ENCODE measurements at regions of chr21 and their contacts with region 1.

Region 1: GRCh38 chr21:29091032-29091431 is 17.6 kb upstream of the CCT8 start:
- DNase-seq: peak; percentile 84
- ATAC-seq: peak; percentile 89
- H3K4me3 ChIP-seq: no peak overlapping the region
- H3K27ac ChIP-seq: peak overlapping the region; percentile 7; the same call in 1 of the 2 replicates
- H3K4me1 ChIP-seq: peaks cover 16% of the 10 kb centered on the region
- H3K27me3 ChIP-seq: no peaks in the 10 kb centered on the region
- CTCF ChIP-seq: no peak

Region 2: GRCh38 chr21:29145354-29145782 is 54.3 kb after region 1 on chr21:
- CTCF ChIA-PET with region 1: interaction called, 3 read pairs
- POLR2A ChIA-PET with region 1: no interaction called
- intact Hi-C with region 1: loop called (anchors 1 kb)
- DNase-seq: peak; percentile 97
- ATAC-seq: peak; percentile 93
- H3K4me3 ChIP-seq: peak overlapping the region; percentile 18; the same call in 1 of the 2 replicates
- H3K27ac ChIP-seq: peak overlapping the region; percentile 77
- H3K4me1 ChIP-seq: peaks cover 34% of the 10 kb centered on the region
- H3K27me3 ChIP-seq: no peaks in the 10 kb centered on the region
- CTCF ChIP-seq: no peak

Region 3: GRCh38 chr21:29155118-29155932 is 64.3 kb after region 1 on chr21:
- CTCF ChIA-PET with region 1: interaction called, 10 read pairs
- POLR2A ChIA-PET with region 1: no interaction called
- intact Hi-C with region 1: loop called (anchors 1 kb)
- DNase-seq: peak; percentile 39
- ATAC-seq: peak; percentile 91
- H3K4me3 ChIP-seq: peak overlapping the region; percentile 59
- H3K27ac ChIP-seq: no peak overlapping the region
- H3K4me1 ChIP-seq: peaks cover 4% of the 10 kb centered on the region
- H3K27me3 ChIP-seq: no peaks in the 10 kb centered on the region
- CTCF ChIP-seq: no peak

Region 4: DNA sequence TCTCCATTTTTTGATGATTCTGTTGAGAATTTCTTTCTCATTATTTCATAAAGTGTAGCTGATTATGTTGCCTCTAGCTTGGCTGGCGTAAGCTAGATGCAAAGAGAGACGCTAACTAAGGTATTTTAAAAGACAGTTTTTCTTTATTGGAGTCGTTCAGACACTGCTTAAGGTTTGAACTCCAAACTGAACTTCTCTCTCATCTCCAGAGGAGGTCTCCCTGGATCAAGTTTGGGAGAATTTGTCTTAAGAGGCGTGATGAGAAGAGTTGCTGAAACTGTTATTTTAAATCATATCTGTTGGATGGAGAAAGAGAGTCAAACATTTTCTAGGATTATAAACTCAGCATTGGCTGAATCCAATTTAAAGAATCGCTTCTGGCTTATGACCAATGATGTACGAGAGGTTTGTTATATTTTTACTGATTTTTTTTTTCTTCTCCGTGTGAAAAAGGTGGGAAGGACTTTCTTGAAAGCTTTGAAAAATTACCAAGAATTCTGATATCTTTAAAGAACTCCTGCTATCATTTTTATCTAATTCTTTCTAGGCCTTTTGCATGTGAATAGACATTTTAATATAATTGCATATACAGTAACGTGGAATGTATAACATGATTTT is 73.4 kb after region 1 on chr21:
- CTCF ChIA-PET with region 1: no interaction called
- POLR2A ChIA-PET with region 1: no interaction called
- intact Hi-C with region 1: loop called (anchors 1 kb)
- DNase-seq: peak; percentile 86
- ATAC-seq: peak; percentile 65
- H3K4me3 ChIP-seq: no peak overlapping the region
- H3K27ac ChIP-seq: no peak overlapping the region
- H3K4me1 ChIP-seq: peaks cover 15% of the 10 kb centered on the region
- H3K27me3 ChIP-seq: no peaks in the 10 kb centered on the region
- CTCF ChIP-seq: peak; percentile 95

Region 5: DNA sequence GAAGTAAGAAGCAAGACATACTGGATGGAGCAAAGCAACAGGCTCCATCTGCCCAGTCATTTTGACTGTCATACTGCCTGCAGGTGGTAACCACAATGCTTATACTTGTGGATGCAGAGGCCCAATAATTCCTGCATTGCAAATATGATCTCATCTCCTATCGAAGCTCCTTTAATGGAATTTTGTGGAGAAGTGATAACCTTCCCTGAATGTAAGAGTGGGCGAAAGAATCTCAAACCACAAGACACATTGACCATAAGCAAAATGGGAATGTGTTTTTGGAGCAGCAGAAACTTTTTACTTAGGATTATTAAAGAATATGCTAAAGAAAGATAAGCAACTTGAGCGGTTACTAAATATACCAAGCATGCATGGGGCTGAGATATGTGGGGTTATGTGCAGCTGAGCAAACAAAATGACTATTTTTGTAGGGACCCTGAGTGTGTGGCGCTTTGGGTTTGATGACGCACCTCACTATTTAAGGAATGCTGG is 130.3 kb after region 1 on chr21:
- CTCF ChIA-PET with region 1: no interaction called
- POLR2A ChIA-PET with region 1: no interaction called
- intact Hi-C with region 1: no loop called
- DNase-seq: no peak
- ATAC-seq: no peak
- H3K4me3 ChIP-seq: no peak overlapping the region
- H3K27ac ChIP-seq: no peak overlapping the region
- H3K4me1 ChIP-seq: peaks cover 34% of the 10 kb centered on the region
- H3K27me3 ChIP-seq: no peaks in the 10 kb centered on the region
- CTCF ChIP-seq: no peak

Region 6: GRCh38 chr21:29372063-29372802 is 281.2 kb after region 1 on chr21:
- CTCF ChIA-PET with region 1: interaction called, 4 read pairs
- POLR2A ChIA-PET with region 1: no interaction called
- intact Hi-C with region 1: loop called (anchors 1 kb)
- DNase-seq: peak; percentile 87
- ATAC-seq: peak; percentile 99
- H3K4me3 ChIP-seq: no peak overlapping the region
- H3K27ac ChIP-seq: no peak overlapping the region
- H3K4me1 ChIP-seq: no peaks in the 10 kb centered on the region
- H3K27me3 ChIP-seq: no peaks in the 10 kb centered on the region
- CTCF ChIP-seq: peak; percentile 85

Region 7: GRCh38 chr21:29849735-29850176 is 758.7 kb after region 1 on chr21:
- CTCF ChIA-PET with region 1: no interaction called
- POLR2A ChIA-PET with region 1: no interaction called
- intact Hi-C with region 1: loop called (anchors 2 kb)
- DNase-seq: peak; percentile 64
- ATAC-seq: peak; percentile 99
- H3K4me3 ChIP-seq: no peak overlapping the region
- H3K27ac ChIP-seq: no peak overlapping the region
- H3K4me1 ChIP-seq: no peaks in the 10 kb centered on the region
- H3K27me3 ChIP-seq: peaks cover 9% of the 10 kb centered on the region; the same call in 1 of the 2 replicates
- CTCF ChIP-seq: peak; percentile 88